OCI-LY7 (cell line): ENCODE measurements at regions of chr3 and their contacts with region 1.

Region 1: GRCh38 chr3:157088601-157089454 is 71.1 kb downstream of the CCNL1 start:
- DNase-seq: peak; percentile 95
- H3K4me3 ChIP-seq: peak overlapping the region; percentile 72
- H3K27ac ChIP-seq: peak overlapping the region; percentile 77
- H3K4me1 ChIP-seq: peaks cover 24% of the 10 kb centered on the region
- CTCF ChIP-seq: peak; percentile 43; the same call in 1 of the 2 replicates

Region 2: GRCh38 chr3:156680243-156680914 is 408.4 kb before region 1 on chr3:
- CTCF ChIA-PET with region 1: interaction called, 3 read pairs
- POLR2A ChIA-PET with region 1: interaction called, 19 read pairs
- intact Hi-C with region 1: loop called (anchors 2 kb)
- DNase-seq: no peak
- H3K4me3 ChIP-seq: no peak overlapping the region
- H3K27ac ChIP-seq: no peak overlapping the region
- H3K4me1 ChIP-seq: peaks cover 86% of the 10 kb centered on the region
- CTCF ChIP-seq: no peak

Region 3: DNA sequence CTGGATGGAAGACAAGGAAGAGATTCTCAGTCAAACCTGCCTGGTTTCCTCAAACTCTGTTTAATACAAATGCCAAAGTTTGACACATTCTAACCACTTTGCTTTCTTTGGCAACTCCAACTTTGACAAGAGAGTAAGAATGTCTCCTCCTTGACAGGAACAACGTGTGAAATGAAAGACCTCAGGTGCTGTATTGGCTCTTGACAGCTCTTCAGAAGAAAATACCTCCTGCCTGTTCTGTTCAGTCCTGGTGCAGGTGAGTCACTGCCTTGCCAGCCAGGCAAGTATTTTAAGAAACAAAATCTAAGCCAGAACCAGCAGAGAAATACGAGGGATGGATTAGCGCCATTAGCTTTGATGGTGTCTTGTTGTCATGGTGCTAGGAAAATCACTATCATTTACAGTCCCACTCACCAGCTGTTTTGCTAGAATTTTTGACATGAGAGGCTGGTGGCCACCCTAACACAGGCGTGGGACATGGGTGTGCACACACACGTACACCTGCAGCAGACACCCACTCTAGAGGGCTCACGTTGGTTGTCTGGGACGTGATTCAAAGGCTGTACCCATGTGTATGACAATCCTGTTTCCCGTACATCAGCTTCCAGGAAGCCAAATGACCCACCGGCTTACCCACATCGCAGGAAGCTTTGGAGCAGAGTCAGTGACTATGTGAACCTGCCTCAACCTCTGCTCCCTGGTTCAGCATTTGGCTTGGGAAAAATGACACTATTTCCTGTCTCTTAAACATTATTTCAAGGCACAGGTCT is 10.7 kb after region 1 on chr3:
- CTCF ChIA-PET with region 1: interaction called, 5 read pairs
- POLR2A ChIA-PET with region 1: interaction called, 171 read pairs
- intact Hi-C with region 1: no loop called
- DNase-seq: no peak
- H3K4me3 ChIP-seq: no peak overlapping the region
- H3K27ac ChIP-seq: no peak overlapping the region
- H3K4me1 ChIP-seq: peaks cover 16% of the 10 kb centered on the region
- CTCF ChIP-seq: no peak

Region 4: GRCh38 chr3:157122116-157122515 is 33.3 kb after region 1 on chr3:
- CTCF ChIA-PET with region 1: interaction called, 3 read pairs
- POLR2A ChIA-PET with region 1: interaction called, 15 read pairs
- intact Hi-C with region 1: no loop called
- DNase-seq: no peak
- H3K4me3 ChIP-seq: no peak overlapping the region
- H3K27ac ChIP-seq: no peak overlapping the region
- H3K4me1 ChIP-seq: no peaks in the 10 kb centered on the region
- CTCF ChIP-seq: no peak

Region 5: GRCh38 chr3:157159762-157160657 is 71.2 kb after region 1 on chr3 and contains the start of gene CCNL1:
- CTCF ChIA-PET with region 1: interaction called, 3 read pairs
- POLR2A ChIA-PET with region 1: interaction called, 17 read pairs
- intact Hi-C with region 1: loop called (anchors 2 kb)
- DNase-seq: peak; percentile 97
- H3K4me3 ChIP-seq: peak within 1 kb of the TSS; percentile 88
- H3K27ac ChIP-seq: peak within 1 kb of the TSS; percentile 92
- H3K4me1 ChIP-seq: peaks cover 48% of the 10 kb centered on the region
- CTCF ChIP-seq: no peak
- total RNA-seq, gene CCNL1: 221 and 280 TPM in 2 replicates